OCI-LY7 (cell line): ENCODE measurements at regions of chr2 and their contacts with region 1.

Region 1: GRCh38 chr2:37376421-37377186 is 32.2 kb downstream of the QPCT start:
- DNase-seq: peak; percentile 95
- H3K4me3 ChIP-seq: peak overlapping the region; percentile 58
- H3K27ac ChIP-seq: peak overlapping the region; percentile 98
- H3K4me1 ChIP-seq: peaks cover 94% of the 10 kb centered on the region
- CTCF ChIP-seq: no peak

Region 2: DNA sequence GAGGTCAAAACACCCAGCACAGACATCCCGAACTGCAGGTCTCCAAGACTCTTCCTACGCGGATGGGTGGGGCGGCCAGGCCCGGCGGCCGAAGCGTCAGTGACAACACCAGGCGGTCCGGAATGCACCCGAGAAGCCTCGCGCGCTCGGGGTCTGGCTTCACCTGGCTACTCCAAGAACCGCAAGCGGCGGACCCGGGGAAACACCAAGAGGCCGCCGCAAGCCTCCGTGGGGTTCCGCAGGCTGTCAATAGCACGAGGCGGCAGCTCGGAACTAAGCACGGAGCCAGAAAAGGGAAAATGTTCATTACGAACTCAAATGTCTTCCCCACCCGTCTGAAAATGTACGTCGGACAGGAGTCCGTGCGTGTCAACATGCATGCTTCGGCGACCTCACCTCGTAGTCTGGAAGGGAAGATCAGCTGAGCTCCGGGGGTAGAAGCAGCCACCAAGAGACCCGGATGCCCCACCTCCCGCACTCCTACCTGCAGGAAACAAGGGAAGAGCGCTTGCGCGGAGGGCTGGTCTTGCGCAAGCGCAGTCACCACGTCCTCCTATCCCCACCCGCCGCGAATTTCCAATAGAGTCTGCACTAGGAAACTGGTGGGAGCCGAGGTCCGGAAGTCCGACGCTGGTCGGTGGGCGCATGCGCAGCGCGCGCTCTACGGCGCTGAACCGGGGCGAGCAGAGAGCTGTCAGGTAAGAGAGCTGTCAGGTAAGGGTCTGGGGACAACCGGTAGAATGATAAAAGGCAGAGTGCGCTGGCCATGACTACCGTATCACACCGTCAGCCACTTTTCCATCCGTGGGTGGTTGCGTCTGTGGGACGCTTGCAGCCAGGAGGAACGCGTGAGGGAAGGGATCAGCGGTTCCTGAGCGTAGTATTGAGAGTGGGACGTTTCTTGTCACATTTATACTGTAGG is 292.5 kb before region 1 on chr2 and contains the starts of genes GPATCH11 and HEATR5B:
- CTCF ChIA-PET with region 1: no interaction called
- POLR2A ChIA-PET with region 1: no interaction called
- intact Hi-C with region 1: loop called (anchors 10 kb)
- DNase-seq: peak; percentile 97
- H3K4me3 ChIP-seq: peak within 1 kb of the TSS; percentile 80
- H3K27ac ChIP-seq: peak within 1 kb of the TSS; percentile 52
- H3K4me1 ChIP-seq: peaks cover 62% of the 10 kb centered on the region
- CTCF ChIP-seq: no peak
- total RNA-seq, gene GPATCH11: 11.6 and 21.2 TPM in 2 replicates
- total RNA-seq, gene HEATR5B: 23.8 TPM in 2 replicates

Region 3: GRCh38 chr2:37330681-37331080 is 45.9 kb before region 1 on chr2:
- CTCF ChIA-PET with region 1: no interaction called
- POLR2A ChIA-PET with region 1: interaction called, 209 read pairs
- intact Hi-C with region 1: loop called (anchors 2 kb)
- DNase-seq: no peak
- H3K4me3 ChIP-seq: no peak overlapping the region
- H3K27ac ChIP-seq: no peak overlapping the region
- H3K4me1 ChIP-seq: peaks cover 50% of the 10 kb centered on the region
- CTCF ChIP-seq: no peak

Region 4: GRCh38 chr2:37344453-37345361 is 31.9 kb before region 1 on chr2 and contains the start of gene QPCT:
- CTCF ChIA-PET with region 1: interaction called, 5 read pairs
- POLR2A ChIA-PET with region 1: interaction called, 208 read pairs
- intact Hi-C with region 1: loop called (anchors 1 kb)
- DNase-seq: peak; percentile 68
- H3K4me3 ChIP-seq: peak within 1 kb of the TSS; percentile 70
- H3K27ac ChIP-seq: peak within 1 kb of the TSS; percentile 41
- H3K4me1 ChIP-seq: peaks cover 79% of the 10 kb centered on the region
- CTCF ChIP-seq: peak; percentile 49
- total RNA-seq, gene QPCT: 3.5 and 8.2 TPM in 2 replicates

Region 5: GRCh38 chr2:37357530-37357929 is 19.1 kb before region 1 on chr2:
- CTCF ChIA-PET with region 1: interaction called, 7 read pairs
- POLR2A ChIA-PET with region 1: interaction called, 179 read pairs
- intact Hi-C with region 1: loop called (anchors 2 kb)
- DNase-seq: no peak
- H3K4me3 ChIP-seq: no peak overlapping the region
- H3K27ac ChIP-seq: peak overlapping the region; percentile 54
- H3K4me1 ChIP-seq: peaks cover 75% of the 10 kb centered on the region
- CTCF ChIP-seq: no peak

Region 6: GRCh38 chr2:37414470-37414949 is 37.9 kb after region 1 on chr2:
- CTCF ChIA-PET with region 1: no interaction called
- POLR2A ChIA-PET with region 1: no interaction called
- intact Hi-C with region 1: no loop called
- DNase-seq: peak; percentile 70
- H3K4me3 ChIP-seq: no peak overlapping the region
- H3K27ac ChIP-seq: no peak overlapping the region
- H3K4me1 ChIP-seq: no peaks in the 10 kb centered on the region
- CTCF ChIP-seq: peak; percentile 89

Region 7: GRCh38 chr2:37449761-37450296 is 73.2 kb after region 1 on chr2:
- CTCF ChIA-PET with region 1: no interaction called
- POLR2A ChIA-PET with region 1: no interaction called
- intact Hi-C with region 1: no loop called
- DNase-seq: no peak
- H3K4me3 ChIP-seq: no peak overlapping the region
- H3K27ac ChIP-seq: no peak overlapping the region
- H3K4me1 ChIP-seq: no peaks in the 10 kb centered on the region
- CTCF ChIP-seq: no peak

Region 8: GRCh38 chr2:37526321-37526720 is 149.7 kb after region 1 on chr2:
- CTCF ChIA-PET with region 1: no interaction called
- POLR2A ChIA-PET with region 1: no interaction called
- intact Hi-C with region 1: no loop called
- DNase-seq: peak; percentile 41
- H3K4me3 ChIP-seq: no peak overlapping the region
- H3K27ac ChIP-seq: no peak overlapping the region
- H3K4me1 ChIP-seq: no peaks in the 10 kb centered on the region
- CTCF ChIP-seq: no peak

Region 9: DNA sequence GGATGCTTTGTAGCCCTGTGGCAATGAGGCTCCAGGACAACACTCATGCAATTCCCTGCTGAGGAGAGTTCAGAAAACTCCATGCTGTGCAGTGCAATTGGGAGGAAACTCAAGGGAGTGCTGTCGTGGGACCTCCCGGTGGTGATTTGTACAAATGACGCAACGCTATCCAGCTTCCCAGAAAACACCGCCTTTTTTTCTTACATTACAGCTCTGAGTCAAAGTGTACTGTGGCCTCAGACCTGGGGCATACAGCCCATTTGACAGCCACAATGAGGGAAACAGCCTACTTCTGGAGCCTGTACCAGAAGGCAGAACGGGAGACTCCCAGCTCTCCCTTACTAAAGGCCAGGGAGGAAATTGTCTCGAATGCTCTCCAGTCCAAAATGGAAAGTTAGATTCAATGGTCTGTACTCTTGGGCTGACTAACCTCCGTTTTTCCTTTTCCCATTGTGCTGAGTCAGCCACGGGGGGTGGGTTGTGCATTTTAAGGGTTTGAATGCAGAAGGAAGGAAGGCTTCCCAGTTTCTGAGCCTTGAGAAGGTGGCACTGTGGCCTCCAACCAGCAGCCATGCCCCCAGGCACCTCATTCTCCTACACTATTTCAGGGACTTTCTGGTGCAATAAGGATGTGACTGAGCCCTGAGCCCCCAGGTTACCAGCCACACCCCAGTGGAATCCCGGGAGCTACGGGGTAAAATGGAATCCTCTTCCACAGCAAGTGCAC is 715.8 kb after region 1 on chr2:
- CTCF ChIA-PET with region 1: no interaction called
- POLR2A ChIA-PET with region 1: no interaction called
- intact Hi-C with region 1: no loop called
- DNase-seq: no peak
- H3K4me3 ChIP-seq: no peak overlapping the region
- H3K27ac ChIP-seq: no peak overlapping the region
- H3K4me1 ChIP-seq: no peaks in the 10 kb centered on the region
- CTCF ChIP-seq: no peak